Panc1 (cell line): ENCODE measurements at regions of chr18 and their contacts with region 1.

Region 1: DNA sequence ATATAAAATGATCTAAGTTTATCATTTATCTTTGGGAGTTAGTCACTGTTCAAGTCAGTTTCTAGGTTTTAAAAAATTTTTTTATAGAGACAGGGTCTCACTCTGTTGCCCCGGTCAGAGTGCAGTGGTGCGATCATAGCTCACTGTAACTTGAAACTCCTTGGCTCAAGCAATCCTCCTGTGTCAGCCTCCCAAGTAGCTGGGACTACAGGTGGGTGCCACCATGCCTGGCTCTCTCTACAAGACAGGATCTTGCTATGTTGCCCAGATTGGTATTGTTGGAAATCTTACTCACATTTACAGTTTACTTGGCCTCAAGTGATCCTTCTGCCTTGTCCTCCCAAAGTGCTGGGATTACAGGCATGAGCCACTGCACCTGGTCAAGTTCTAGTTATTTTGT is 74.5 kb downstream of the MIB1 start:
- DNase-seq: no peak
- ATAC-seq: no peak
- H3K4me3 ChIP-seq: no peak overlapping the region
- H3K27ac ChIP-seq: no peak overlapping the region
- H3K4me1 ChIP-seq: no peaks in the 10 kb centered on the region
- H3K27me3 ChIP-seq: no peaks in the 10 kb centered on the region
- CTCF ChIP-seq: no peak

Region 2: DNA sequence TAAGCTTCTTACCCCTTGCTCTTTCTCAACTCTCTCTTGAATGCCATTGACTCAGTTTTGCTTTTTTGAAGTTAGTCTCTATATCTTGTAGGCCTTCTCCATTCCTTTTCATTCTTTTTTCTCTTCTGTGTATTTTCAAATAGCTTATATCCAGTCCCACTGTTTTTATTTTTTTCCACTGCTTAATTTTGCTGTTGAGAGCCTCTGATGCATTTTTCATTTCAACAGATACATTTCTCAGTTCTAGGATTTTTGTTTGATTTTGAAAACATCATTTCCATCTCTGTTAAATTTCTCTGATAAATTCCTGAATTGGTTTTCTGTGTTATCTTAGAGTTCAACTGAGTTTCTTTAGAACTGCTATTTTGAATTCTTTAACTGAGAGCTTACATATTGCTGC is 28.6 kb before region 1 on chr18:
- CTCF ChIA-PET with region 1: no interaction called
- POLR2A ChIA-PET with region 1: interaction called, 10 read pairs
- in situ Hi-C with region 1: no loop called
- intact Hi-C with region 1: no loop called
- DNase-seq: no peak
- ATAC-seq: no peak
- H3K4me3 ChIP-seq: no peak overlapping the region
- H3K27ac ChIP-seq: no peak overlapping the region
- H3K4me1 ChIP-seq: no peaks in the 10 kb centered on the region
- H3K27me3 ChIP-seq: no peaks in the 10 kb centered on the region
- CTCF ChIP-seq: no peak

Region 3: GRCh38 chr18:21868770-21869169 is 53.7 kb after region 1 on chr18:
- CTCF ChIA-PET with region 1: no interaction called
- POLR2A ChIA-PET with region 1: no interaction called
- in situ Hi-C with region 1: no loop called
- intact Hi-C with region 1: no loop called
- DNase-seq: no peak
- ATAC-seq: no peak
- H3K4me3 ChIP-seq: no peak overlapping the region
- H3K27ac ChIP-seq: no peak overlapping the region
- H3K4me1 ChIP-seq: no peaks in the 10 kb centered on the region
- H3K27me3 ChIP-seq: no peaks in the 10 kb centered on the region
- CTCF ChIP-seq: no peak

Region 4: GRCh38 chr18:22632191-22632590 is 817.1 kb after region 1 on chr18:
- CTCF ChIA-PET with region 1: no interaction called
- POLR2A ChIA-PET with region 1: no interaction called
- in situ Hi-C with region 1: no loop called
- intact Hi-C with region 1: no loop called
- DNase-seq: no peak
- ATAC-seq: no peak
- H3K4me3 ChIP-seq: no peak overlapping the region
- H3K27ac ChIP-seq: no peak overlapping the region
- H3K4me1 ChIP-seq: no peaks in the 10 kb centered on the region
- H3K27me3 ChIP-seq: 0 out of 2 replicates have a peak, but pooled peaks cover 3% of the 10 kb centered on the region
- CTCF ChIP-seq: no peak